Prostate gland (tissue), 2 donors: ENCODE measurements at regions of chr5 and their contacts with region 1.

Region 1: GRCh38 chr5:176537608-176538504 is 654 bp upstream of the RNF44 start:
- DNase-seq: peak; percentile 100
- H3K4me3 ChIP-seq: peak overlapping the region; percentile 92 to 95
- H3K27ac ChIP-seq: peak overlapping the region; percentile 98
- H3K4me1 ChIP-seq: peaks cover 14% of the 10 kb centered on the region
- H3K27me3 ChIP-seq: no peaks in the 10 kb centered on the region
- CTCF ChIP-seq: peak in 1 of 4 experiments; percentile 15
- POLR2A ChIP-seq: peak; percentile 89

Region 2: DNA sequence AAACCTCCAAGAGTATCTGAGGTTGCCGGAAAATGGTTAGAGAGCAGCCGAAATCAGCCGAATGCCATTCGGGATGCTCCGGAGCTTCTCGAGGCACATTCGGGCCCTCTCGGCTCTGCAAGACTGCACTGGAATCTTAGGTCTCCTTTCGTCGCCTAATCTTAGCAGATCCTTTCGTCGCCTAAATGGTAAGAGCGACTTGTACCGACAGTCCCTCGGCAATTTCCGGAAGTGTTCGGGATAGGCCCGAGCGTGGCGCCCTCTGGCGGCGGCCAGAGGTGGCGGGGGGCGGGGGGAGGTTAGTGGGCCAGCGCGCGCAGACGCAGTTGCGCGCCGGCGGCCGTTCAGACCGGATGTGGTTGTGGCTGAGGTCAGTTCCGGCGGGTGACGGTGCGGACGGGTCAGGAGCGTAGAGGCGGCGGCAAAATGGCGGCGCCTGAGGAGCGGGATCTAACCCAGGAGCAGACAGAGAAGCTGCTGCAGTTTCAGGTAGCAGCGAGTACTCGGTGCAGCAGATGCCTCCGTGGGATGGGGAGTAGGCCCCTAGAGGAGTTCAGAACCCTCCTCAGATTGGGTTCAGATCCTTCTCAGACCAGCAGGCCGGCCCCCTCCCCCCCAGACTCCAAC is 89.8 kb before region 1 on chr5 and contains the start of gene FAF2:
- intact Hi-C with region 1: loop called (anchors 2 kb)
- DNase-seq: peak; percentile 96
- H3K4me3 ChIP-seq: peak within 1 kb of the TSS; percentile 92
- H3K27ac ChIP-seq: peak within 1 kb of the TSS; percentile 94 to 95
- H3K4me1 ChIP-seq: peaks cover 11% of the 10 kb centered on the region
- H3K27me3 ChIP-seq: no peaks in the 10 kb centered on the region
- CTCF ChIP-seq: peak; percentile 98 to 100 (median 100)
- POLR2A ChIP-seq: peak; percentile 64
- total RNA-seq, gene FAF2: 36.8 to 43.5 TPM